Aorta (tissue), 5 donors: ENCODE measurements at regions of chr6 and their contacts with region 1.

Region 1: DNA sequence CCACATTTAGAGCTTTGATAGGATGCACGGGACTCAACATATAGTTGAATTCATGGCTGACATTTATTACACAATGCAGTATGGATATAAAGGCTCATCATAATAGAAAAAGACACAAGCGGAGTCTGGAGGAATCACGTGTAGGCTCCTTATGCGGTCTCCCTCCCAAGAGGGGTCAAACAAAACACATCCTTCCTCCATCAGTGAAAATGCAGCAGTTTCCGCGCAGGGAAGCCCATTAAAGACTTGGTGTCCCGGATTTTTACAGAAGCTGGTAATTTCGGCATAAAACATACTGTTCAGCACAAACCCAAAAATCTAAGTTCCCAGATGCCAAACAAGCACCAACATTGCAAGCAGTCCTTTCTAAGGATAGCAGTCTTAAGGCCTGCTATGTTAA is 1.1 kb downstream of the USP45 start:
- DNase-seq: no peak
- ATAC-seq: no peak
- H3K4me3 ChIP-seq: peak overlapping the region; percentile 4 to 29
- H3K27ac ChIP-seq: no peak overlapping the region
- H3K4me1 ChIP-seq: peaks cover 0 to 1% of the 10 kb centered on the region in 2 donors
- H3K27me3 ChIP-seq: no peaks in the 10 kb centered on the region

Region 2: DNA sequence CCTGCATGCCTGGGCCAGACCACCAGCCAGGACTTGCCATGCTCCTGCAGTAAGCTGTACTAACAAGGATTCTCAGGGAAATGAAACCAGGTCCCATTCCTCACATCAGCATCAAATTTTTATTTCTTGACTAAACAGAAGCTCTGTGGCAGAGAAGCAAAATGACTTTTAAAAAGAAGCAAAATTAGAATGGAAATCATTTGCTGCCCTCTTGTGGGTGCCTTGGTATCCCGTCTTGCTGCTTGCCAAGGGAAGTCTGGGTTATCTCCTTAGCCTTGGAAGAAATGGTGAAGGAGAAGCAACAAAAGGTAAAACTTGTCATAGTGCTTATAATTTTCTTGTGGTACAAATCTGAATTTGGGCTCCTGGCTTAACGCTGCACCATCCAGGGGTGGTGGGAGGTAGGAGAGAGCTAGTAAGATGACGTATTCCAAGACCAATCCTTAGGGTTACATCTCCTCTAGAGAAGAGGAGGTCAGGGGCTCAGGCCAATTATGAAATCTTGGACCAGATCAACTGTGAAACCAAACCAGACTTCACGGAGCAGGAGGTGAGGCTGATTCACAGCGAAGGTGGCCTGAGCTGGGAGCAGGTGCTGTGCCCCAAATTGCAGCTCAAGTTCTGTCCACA is 272.1 kb before region 1 on chr6:
- intact Hi-C with region 1: no loop called
- DNase-seq: no peak
- ATAC-seq: no peak
- H3K4me3 ChIP-seq: no peak overlapping the region
- H3K27ac ChIP-seq: no peak overlapping the region
- H3K4me1 ChIP-seq: no peaks in the 10 kb centered on the region
- H3K27me3 ChIP-seq: peaks cover 0 to 5% of the 10 kb centered on the region in 2 donors

Region 3: GRCh38 chr6:99378636-99379035 is 135.5 kb before region 1 on chr6:
- intact Hi-C with region 1: no loop called
- DNase-seq: no peak
- ATAC-seq: no peak
- H3K4me3 ChIP-seq: no peak overlapping the region
- H3K27ac ChIP-seq: no peak overlapping the region
- H3K4me1 ChIP-seq: no peaks in the 10 kb centered on the region
- H3K27me3 ChIP-seq: no peaks in the 10 kb centered on the region

Region 4: GRCh38 chr6:99434702-99435530 is 79.2 kb before region 1 on chr6:
- intact Hi-C with region 1: loop called in 1 of 2 experiments (anchors 5 kb)
- DNase-seq: no peak
- ATAC-seq: peak; percentile 76
- H3K4me3 ChIP-seq: no peak overlapping the region
- H3K27ac ChIP-seq: no peak overlapping the region
- H3K4me1 ChIP-seq: no peaks in the 10 kb centered on the region
- H3K27me3 ChIP-seq: no peaks in the 10 kb centered on the region